ENCODE measurements at regions of chr14 and their contacts with region 1.

Region 1: DNA sequence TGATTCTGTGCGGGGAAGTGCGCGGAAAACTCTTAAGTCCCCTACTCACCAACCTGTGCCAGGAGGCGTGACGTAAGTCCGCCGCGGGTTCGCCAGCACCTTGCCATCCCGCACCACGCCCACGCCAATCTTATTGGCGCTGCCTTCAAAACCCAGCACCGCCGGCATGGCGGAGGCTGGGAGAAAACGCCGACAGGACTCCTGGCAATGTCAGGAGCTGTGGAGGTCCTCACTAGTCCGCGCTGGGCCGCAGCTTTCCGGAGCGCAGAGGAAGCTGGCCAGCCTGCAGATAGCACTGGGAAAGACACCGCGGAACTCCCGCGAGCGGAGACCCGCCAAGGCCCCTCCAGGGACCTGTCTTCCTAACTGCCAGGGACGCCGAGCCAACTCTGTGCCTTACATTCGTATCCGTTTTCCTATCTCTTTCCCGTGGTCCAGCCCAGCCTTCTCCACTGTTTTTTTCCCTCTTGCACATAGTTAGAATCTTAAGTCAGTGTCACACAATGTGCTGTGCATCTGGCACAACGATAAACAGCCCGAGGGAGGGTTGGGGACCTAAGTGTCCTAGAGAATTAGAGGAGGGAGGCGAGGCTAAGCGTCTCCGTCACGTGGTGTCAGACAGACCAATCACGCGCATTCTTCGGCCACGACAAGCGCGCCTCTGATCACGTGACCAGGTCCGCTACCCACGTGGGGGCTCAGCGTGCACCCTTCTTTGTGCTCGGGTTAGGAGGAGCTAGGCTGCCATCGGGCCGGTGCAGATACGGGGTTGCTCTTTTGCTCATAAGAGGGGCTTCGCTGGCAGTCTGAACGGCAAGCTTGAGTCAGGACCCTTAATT is at the starts of genes APEX1 and OSGEP:
- DNase-seq: peak; percentile 92 to 98 (median 96)
- ATAC-seq: peak; percentile 90
- H3K4me3 ChIP-seq: peak within 1 kb of the TSS; percentile 78
- H3K27ac ChIP-seq: peak within 1 kb of the TSS; percentile 99
- H3K4me1 ChIP-seq: peaks cover 15 to 18% of the 10 kb centered on the region in 2 experiments; a peak in 4 of 5 replicates
- H3K27me3 ChIP-seq: no peaks in the 10 kb centered on the region
- CTCF ChIP-seq: peak in 1 of 3 experiments; percentile 10; a peak in 1 of 6 replicates
- EP300 ChIP-seq: no peak
- POLR2A ChIP-seq: peak; percentile 87
- RAD21 ChIP-seq: no peak
- polyA plus RNA-seq, gene APEX1: 158 to 234 TPM
- polyA plus RNA-seq, gene OSGEP: 32.1 to 59.2 TPM

Region 2: GRCh38 chr14:20413045-20413799 is 41.5 kb before region 1 on chr14 and contains the start of gene TEP1:
- CTCF ChIA-PET with region 1: no interaction called
- POLR2A ChIA-PET with region 1: no interaction called
- in situ Hi-C with region 1: no loop called
- intact Hi-C with region 1: loop called (anchors 1 kb)
- DNase-seq: peak; percentile 60 to 77 (median 66)
- ATAC-seq: peak; percentile 94
- H3K4me3 ChIP-seq: peak within 1 kb of the TSS; percentile 93
- H3K27ac ChIP-seq: peak within 1 kb of the TSS; percentile 73
- H3K4me1 ChIP-seq: peaks cover 6 to 13% of the 10 kb centered on the region in 2 experiments; a peak in 4 of 5 replicates
- H3K27me3 ChIP-seq: no peaks in the 10 kb centered on the region
- CTCF ChIP-seq: no peak
- EP300 ChIP-seq: no peak
- POLR2A ChIP-seq: peak; percentile 77
- RAD21 ChIP-seq: no peak
- polyA plus RNA-seq, gene TEP1: 1.0 to 1.3 TPM

Region 3: DNA sequence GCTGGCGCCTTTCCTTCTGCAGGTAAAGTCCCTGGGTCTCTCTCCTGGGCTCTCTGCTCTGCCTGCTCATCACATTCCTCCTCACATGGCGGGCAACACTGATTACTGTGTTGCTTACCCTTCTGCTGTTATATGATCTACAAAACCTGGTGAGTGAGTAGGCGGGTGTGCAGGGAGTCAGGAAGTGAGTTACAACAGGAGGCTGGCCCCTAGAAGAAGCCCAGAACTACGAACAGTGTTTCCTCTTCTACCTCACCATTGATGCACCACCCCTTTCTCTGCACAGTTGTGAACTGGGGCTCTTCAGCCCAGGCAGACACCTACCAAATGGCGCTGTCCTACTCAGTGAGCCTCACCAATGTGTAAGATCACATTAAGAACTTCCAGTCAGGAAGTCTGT is 13.9 kb before region 1 on chr14:
- CTCF ChIA-PET with region 1: no interaction called
- POLR2A ChIA-PET with region 1: interaction called, 10 read pairs
- in situ Hi-C with region 1: no loop called
- intact Hi-C with region 1: no loop called
- DNase-seq: no peak
- ATAC-seq: no peak; the same call in 2 of the 3 replicates
- H3K4me3 ChIP-seq: no peak overlapping the region
- H3K27ac ChIP-seq: no peak overlapping the region
- H3K4me1 ChIP-seq: peaks cover 0 to 6% of the 10 kb centered on the region in 2 experiments; a peak in 3 of 5 replicates
- H3K27me3 ChIP-seq: no peaks in the 10 kb centered on the region
- CTCF ChIP-seq: no peak
- EP300 ChIP-seq: no peak
- POLR2A ChIP-seq: no peak
- RAD21 ChIP-seq: no peak

Region 4: GRCh38 chr14:20469242-20469889 is 14.6 kb after region 1 on chr14 and contains the start of gene PNP:
- CTCF ChIA-PET with region 1: no interaction called
- POLR2A ChIA-PET with region 1: interaction called, 29 read pairs
- in situ Hi-C with region 1: no loop called
- intact Hi-C with region 1: no loop called
- DNase-seq: peak; percentile 90 to 96 (median 91)
- ATAC-seq: peak; percentile 97
- H3K4me3 ChIP-seq: peak within 1 kb of the TSS; percentile 82
- H3K27ac ChIP-seq: peak within 1 kb of the TSS; percentile 76
- H3K4me1 ChIP-seq: peaks cover 5 to 15% of the 10 kb centered on the region in 2 experiments; a peak in 3 of 5 replicates
- H3K27me3 ChIP-seq: no peaks in the 10 kb centered on the region
- CTCF ChIP-seq: no peak
- EP300 ChIP-seq: no peak
- POLR2A ChIP-seq: peak; percentile 99
- RAD21 ChIP-seq: no peak
- polyA plus RNA-seq, gene PNP: 96.2 to 137 TPM

Region 5: DNA sequence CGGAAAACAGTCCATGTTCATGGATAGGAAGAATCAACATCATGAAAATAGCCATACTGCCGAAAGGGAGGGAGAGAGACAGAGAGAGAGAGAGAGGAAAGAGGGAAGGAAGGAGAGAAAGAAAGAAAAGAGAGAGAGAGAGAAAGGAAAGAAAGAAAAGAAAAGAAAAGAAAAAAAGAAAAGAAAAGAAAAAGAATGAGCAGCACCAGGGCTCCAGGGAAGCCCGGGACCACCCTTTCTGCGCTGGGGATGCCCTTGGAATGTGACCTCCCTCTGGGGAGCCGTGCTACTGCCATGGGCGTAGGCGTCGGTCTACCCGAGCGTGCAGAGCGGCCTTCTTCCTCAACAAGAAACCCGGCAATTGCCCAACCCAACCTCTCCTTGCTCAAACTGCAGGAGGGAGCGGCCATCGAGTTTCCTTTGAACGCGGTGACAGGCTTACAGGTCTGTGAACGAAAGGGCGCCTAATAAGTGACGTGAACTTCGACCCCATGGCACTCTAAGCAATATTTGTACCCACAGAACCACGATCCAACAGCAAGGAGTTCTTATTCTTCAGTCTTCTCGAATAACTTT is 169.8 kb after region 1 on chr14:
- CTCF ChIA-PET with region 1: no interaction called
- POLR2A ChIA-PET with region 1: no interaction called
- in situ Hi-C with region 1: no loop called
- intact Hi-C with region 1: no loop called
- DNase-seq: peak; percentile 18 to 76 (median 40)
- ATAC-seq: peak; percentile 75
- H3K4me3 ChIP-seq: peak overlapping the region; percentile 42
- H3K27ac ChIP-seq: peak overlapping the region; percentile 52; the same call in 2 of the 3 replicates
- H3K4me1 ChIP-seq: peaks cover 8 to 14% of the 10 kb centered on the region in 2 experiments; a peak in 3 of 5 replicates
- H3K27me3 ChIP-seq: peaks cover 4 to 5% of the 10 kb centered on the region in 2 experiments; a peak in 2 of 5 replicates
- CTCF ChIP-seq: no peak
- EP300 ChIP-seq: no peak
- POLR2A ChIP-seq: no peak
- RAD21 ChIP-seq: no peak